GM12878 (cell line): ENCODE measurements at regions of chr6 and their contacts with region 1.

Region 1: DNA sequence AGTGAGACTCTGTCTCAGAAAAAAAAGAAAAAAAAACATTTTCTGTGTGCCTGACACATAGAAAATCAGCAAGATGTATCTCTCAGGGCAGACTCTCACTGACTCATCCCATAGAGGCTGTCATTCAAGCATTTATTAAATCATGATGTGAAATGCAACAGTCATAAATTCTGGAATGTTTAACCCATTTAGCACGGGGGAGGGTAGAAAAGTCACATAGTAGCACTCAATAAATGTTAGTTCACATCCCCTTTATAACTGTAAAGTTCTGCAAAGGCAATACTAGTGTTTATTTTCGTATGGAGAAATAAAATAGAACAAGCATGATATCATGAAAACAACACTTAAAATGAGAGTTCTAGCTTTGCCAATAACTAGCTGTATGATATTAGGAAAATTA is 15.5 kb upstream of the CARMIL1 start:
- DNase-seq: no peak
- ATAC-seq: no peak
- H3K4me3 ChIP-seq: no peak overlapping the region
- H3K27ac ChIP-seq: no peak overlapping the region
- H3K4me1 ChIP-seq: no peaks in the 10 kb centered on the region
- H3K27me3 ChIP-seq: peaks cover 0 to 3% of the 10 kb centered on the region in 2 experiments; a peak in 1 of 4 replicates
- CTCF ChIP-seq: no peak
- EP300 ChIP-seq: no peak
- POLR2A ChIP-seq: no peak
- RAD21 ChIP-seq: no peak

Region 2: GRCh38 chr6:25107218-25107617 is 156.4 kb before region 1 on chr6:
- CTCF ChIA-PET with region 1: no interaction called
- POLR2A ChIA-PET with region 1: no interaction called
- RAD21 ChIA-PET with region 1: no interaction called
- SMC1A ChIA-PET with region 1: no interaction called
- in situ Hi-C with region 1: no loop called
- intact Hi-C with region 1: no loop called
- DNase-seq: no peak
- ATAC-seq: peak; percentile 27
- H3K4me3 ChIP-seq: no peak overlapping the region
- H3K27ac ChIP-seq: no peak overlapping the region
- H3K4me1 ChIP-seq: peaks cover 6% of the 10 kb centered on the region
- H3K27me3 ChIP-seq: no peaks in the 10 kb centered on the region
- CTCF ChIP-seq: no peak
- EP300 ChIP-seq: no peak
- POLR2A ChIP-seq: no peak
- RAD21 ChIP-seq: no peak

Region 3: GRCh38 chr6:25250878-25251277 is 12.8 kb before region 1 on chr6:
- CTCF ChIA-PET with region 1: interaction called, 28 read pairs
- POLR2A ChIA-PET with region 1: no interaction called
- RAD21 ChIA-PET with region 1: interaction called, 12 read pairs
- SMC1A ChIA-PET with region 1: interaction called, 12 read pairs
- in situ Hi-C with region 1: no loop called
- intact Hi-C with region 1: no loop called
- DNase-seq: peak; percentile 38
- ATAC-seq: peak; percentile 74
- H3K4me3 ChIP-seq: no peak overlapping the region
- H3K27ac ChIP-seq: no peak overlapping the region
- H3K4me1 ChIP-seq: no peaks in the 10 kb centered on the region
- H3K27me3 ChIP-seq: no peaks in the 10 kb centered on the region
- CTCF ChIP-seq: no peak
- EP300 ChIP-seq: no peak
- POLR2A ChIP-seq: no peak
- RAD21 ChIP-seq: no peak

Region 4: GRCh38 chr6:25511376-25511775 is 247.7 kb after region 1 on chr6:
- CTCF ChIA-PET with region 1: interaction called, 18 read pairs
- POLR2A ChIA-PET with region 1: no interaction called
- RAD21 ChIA-PET with region 1: interaction called, 3 read pairs
- SMC1A ChIA-PET with region 1: interaction called, 5 read pairs
- in situ Hi-C with region 1: no loop called
- intact Hi-C with region 1: no loop called
- DNase-seq: no peak
- ATAC-seq: no peak
- H3K4me3 ChIP-seq: no peak overlapping the region
- H3K27ac ChIP-seq: no peak overlapping the region
- H3K4me1 ChIP-seq: no peaks in the 10 kb centered on the region
- H3K27me3 ChIP-seq: no peaks in the 10 kb centered on the region
- CTCF ChIP-seq: no peak
- EP300 ChIP-seq: no peak
- POLR2A ChIP-seq: no peak
- RAD21 ChIP-seq: no peak

Region 5: GRCh38 chr6:25542984-25543910 is 279.6 kb after region 1 on chr6:
- CTCF ChIA-PET with region 1: interaction called, 11 read pairs
- POLR2A ChIA-PET with region 1: no interaction called
- RAD21 ChIA-PET with region 1: interaction called, 5 read pairs
- SMC1A ChIA-PET with region 1: interaction called, 3 read pairs
- in situ Hi-C with region 1: no loop called
- intact Hi-C with region 1: no loop called
- DNase-seq: no peak
- ATAC-seq: no peak
- H3K4me3 ChIP-seq: no peak overlapping the region
- H3K27ac ChIP-seq: no peak overlapping the region
- H3K4me1 ChIP-seq: no peaks in the 10 kb centered on the region
- H3K27me3 ChIP-seq: no peaks in the 10 kb centered on the region
- CTCF ChIP-seq: no peak
- EP300 ChIP-seq: no peak
- POLR2A ChIP-seq: no peak
- RAD21 ChIP-seq: no peak

Region 6: DNA sequence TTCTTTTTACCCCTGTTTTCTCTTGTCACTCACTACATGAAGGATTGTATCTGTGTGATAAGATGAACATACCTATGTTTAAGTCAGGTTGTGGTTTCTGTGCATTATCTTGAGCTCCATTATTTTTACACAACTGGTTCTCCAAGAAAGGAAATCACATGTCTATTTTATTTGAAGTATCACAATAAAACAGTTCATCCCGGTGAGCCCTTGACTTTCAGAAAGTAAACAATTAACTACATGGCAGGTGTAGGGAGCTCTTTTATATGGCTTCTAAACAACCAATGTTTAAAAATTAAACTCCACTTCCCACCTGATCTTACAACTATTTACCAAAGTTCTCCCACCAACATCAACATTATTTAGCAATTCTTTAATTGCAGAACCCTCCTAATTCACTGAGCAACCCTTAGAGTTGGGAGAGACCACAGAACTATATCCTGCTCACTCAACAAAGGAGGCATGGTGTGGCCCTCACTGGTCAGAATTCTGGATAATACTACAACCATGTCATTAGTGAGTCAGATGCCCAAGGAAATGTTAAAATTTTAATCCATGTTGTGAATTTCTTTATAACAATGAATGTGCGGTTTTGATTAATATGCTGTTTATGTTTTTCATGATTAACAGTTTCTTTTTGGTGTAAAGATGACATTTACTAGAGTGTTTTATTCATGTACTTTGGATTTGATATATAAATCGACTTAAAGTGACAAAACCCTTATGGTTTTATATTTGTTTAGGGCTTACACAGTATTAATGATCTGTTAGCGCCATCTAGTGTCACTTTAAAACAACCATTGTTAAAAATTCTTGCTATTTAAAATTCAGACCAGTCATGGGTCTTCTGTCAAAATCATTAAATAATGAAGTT is 338.4 kb after region 1 on chr6:
- CTCF ChIA-PET with region 1: interaction called, 44 read pairs
- POLR2A ChIA-PET with region 1: no interaction called
- RAD21 ChIA-PET with region 1: interaction called, 18 read pairs
- SMC1A ChIA-PET with region 1: interaction called, 23 read pairs
- in situ Hi-C with region 1: no loop called
- intact Hi-C with region 1: loop called (anchors 1 kb)
- DNase-seq: no peak
- ATAC-seq: 0 out of 3 replicates have a peak, but pooled peaks have one; percentile 39
- H3K4me3 ChIP-seq: no peak overlapping the region
- H3K27ac ChIP-seq: no peak overlapping the region
- H3K4me1 ChIP-seq: no peaks in the 10 kb centered on the region
- H3K27me3 ChIP-seq: no peaks in the 10 kb centered on the region
- CTCF ChIP-seq: peak; percentile 24 to 69 (median 45); a peak in 5 of 6 replicates
- EP300 ChIP-seq: no peak
- POLR2A ChIP-seq: no peak
- RAD21 ChIP-seq: peak; percentile 72